ENCODE measurements at regions of chr16 and their contacts with region 1.

Region 1: DNA sequence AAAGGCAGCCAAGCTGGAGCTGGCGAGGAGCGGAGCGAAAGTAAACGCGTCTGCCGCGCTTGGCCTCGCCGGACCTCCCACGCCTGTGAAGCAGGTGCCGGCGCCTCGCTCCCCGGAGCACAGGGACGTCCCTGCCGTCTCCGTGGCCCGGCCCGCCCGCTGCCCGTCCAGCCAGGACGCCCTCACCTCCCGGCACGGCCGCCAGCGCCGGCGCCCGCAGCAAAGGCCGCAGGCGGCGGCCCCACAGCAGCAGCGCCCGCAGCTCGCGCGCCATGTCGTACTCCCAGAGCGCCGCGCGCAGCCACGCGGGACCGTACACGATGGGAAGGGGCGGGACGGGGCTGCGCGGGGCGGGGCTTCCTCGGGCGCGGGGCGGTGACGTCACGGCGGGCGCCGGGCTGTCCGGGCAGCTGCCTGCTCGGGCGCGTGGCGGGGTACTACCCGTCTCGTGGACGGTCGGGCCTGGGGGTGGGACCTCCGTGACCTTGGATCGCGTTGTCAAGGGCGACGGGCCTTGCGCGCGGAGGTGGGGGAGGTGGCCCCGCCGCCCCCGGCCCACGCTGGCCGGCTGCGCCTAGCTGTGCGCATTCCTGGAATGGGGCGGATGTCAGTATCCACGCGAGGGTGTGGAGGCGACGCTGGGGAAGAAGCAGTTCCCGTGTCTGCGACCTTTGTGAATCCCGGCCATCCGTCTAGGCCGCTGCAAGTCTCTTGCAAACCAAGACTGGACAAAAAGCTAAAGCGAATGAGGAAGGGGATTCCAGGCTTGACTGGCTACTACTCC is at the start of gene TRAP1:
- DNase-seq: peak; percentile 44 to 93
- H3K4me3 ChIP-seq: peak within 1 kb of the TSS; percentile 78 to 95
- H3K27ac ChIP-seq: peak within 1 kb of the TSS; percentile 84 to 87
- H3K4me1 ChIP-seq: peaks cover 0 to 7% of the 10 kb centered on the region in 2 donors
- H3K27me3 ChIP-seq: no peaks in the 10 kb centered on the region
- CTCF ChIP-seq: no peak
- total RNA-seq, gene TRAP1: 169 TPM

Region 2: DNA sequence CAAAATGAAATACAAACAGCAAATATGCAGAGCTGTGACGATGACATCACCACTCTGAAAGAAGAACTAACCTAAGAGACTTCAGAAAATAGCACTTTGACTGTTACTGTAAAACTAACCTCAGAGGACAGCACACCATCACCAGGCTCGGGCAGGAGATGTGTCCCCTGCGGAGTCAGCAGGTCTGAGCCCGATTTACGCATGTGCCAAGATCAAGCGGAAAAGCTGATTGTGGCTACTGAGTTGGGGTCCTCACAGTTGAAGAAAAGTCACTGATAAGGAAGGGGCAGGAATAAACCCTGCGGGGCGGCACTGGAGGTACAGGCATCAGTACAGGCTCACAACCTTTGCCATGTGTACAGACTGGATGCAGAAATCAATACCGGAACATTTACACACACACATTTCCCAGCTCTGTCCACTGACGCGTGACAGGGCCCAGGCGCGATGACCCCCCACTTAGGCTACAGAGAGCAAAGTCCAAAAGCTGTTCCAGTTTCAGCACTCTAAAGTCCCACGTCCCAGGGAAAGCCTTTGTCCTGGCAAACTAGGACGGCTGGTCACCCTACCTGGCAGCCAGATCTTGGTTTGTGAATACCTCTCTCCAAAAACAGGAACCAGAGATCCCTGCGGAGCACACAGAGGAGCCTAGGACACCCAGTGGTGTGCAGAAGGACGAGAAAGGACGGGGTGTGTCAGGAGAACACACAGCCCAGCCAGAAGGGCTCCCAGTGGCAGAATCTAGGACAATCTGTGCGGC is 21.6 kb before region 1 on chr16:
- intact Hi-C with region 1: loop called (anchors 2 kb)
- DNase-seq: no peak
- H3K4me3 ChIP-seq: no peak overlapping the region
- H3K27ac ChIP-seq: no peak overlapping the region
- H3K4me1 ChIP-seq: peaks cover 0 to 1% of the 10 kb centered on the region in 2 donors
- H3K27me3 ChIP-seq: no peaks in the 10 kb centered on the region
- CTCF ChIP-seq: no peak

Region 3: DNA sequence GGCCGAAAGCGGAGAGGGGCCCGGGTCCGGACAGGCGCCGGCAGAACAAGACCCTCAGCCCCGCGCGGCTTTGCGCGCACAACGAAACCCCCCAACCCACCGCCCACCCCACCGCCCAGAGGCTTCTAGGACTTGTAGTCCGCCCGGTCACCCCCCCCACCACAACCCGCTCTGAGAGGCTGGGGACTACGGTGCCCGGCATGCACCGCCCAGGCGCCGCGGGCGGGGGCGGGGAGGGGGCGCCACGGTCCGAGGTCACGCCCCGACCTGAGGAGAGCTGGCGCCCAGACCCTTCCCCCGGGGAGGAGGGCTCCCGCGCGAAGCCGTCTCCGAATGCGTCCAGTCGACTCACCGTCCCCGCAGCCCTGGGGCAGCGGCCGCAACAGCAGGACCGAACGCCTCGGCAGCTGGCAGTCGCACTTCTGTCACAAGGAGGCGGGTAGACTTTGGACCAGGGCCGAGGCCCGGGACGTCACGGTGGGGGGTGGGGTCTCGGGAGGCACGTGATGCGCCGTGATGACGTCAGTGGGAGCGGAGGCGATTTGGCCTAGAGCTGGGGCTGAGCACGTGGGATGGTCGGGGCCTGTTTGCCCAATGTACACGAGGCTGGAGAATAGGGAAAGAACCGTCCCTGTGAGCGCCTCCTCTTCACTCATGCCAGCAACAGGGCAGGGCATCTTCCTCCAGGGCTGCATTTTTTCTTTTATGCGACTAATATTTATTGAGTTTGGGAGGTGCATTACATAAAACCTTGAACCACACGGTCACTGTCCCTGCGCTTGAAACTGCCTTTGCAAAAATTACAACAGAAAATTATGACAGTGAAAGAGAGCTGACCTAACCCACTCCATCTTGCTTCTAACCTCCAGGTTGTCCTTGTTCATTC is 821.2 kb after region 1 on chr16 and contains the start of gene CDIP1:
- intact Hi-C with region 1: loop called (anchors 10 kb)
- DNase-seq: peak; percentile 91 to 98
- H3K4me3 ChIP-seq: peak within 1 kb of the TSS; percentile 71 to 95
- H3K27ac ChIP-seq: peak within 1 kb of the TSS; percentile 87 to 90
- H3K4me1 ChIP-seq: peaks cover 13 to 16% of the 10 kb centered on the region in 2 donors
- H3K27me3 ChIP-seq: no peaks in the 10 kb centered on the region
- CTCF ChIP-seq: peak in 1 of 3 experiments; percentile 8
- total RNA-seq, gene CDIP1: 36.9 TPM